PC-9 (cell line): ENCODE measurements at regions of chr6 and their contacts with region 1.

Region 1: GRCh38 chr6:28910902-28911690 is 12.7 kb downstream of the TRIM27 start:
- DNase-seq: peak; percentile 52 to 62
- H3K4me3 ChIP-seq: no peak overlapping the region
- H3K27ac ChIP-seq: no peak overlapping the region
- H3K4me1 ChIP-seq: no peaks in the 10 kb centered on the region
- H3K27me3 ChIP-seq: no peaks in the 10 kb centered on the region
- CTCF ChIP-seq: no peak

Region 2: DNA sequence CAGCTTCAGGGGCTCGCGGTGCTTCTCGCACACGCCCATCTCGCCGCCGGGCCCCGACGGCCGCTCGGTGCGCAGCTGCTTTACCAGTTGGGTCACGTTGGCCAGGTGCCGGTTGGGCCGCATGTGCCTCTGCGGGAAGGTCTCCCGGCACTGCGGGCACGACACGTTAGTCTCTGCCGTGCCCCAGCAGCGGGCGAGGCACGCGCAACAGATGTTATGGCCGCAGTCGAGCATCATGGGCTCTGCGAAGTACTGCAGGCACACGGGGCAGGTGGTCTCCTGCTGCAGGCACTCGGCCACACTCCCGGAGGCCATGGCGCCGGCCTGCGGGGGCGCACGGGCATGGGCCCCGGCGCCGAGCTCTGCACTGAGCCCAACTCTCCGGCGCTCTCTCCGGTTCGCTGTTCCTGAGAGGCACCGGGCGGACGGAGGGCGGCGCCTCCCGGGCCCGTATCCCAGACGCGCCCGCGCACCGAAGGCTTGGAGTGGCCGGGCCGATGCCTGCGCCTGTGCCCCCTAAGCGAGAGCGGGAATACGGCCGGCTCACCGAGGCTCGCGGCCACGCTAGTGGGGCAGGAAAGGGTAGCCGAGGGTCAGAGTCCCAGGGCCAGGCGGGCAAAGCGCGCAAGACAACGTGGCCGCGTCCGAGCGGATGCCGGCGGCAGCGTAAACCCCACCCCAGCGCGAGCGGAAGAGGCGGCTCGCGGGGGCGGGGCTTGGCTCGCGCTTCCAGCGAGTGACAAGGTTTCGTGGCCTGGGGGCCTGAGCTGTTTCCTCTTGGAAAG is 12.4 kb after region 1 on chr6 and contains the start of gene TRIM27:
- CTCF ChIA-PET with region 1: interaction called, 6 read pairs
- POLR2A ChIA-PET with region 1: interaction called, 33 read pairs
- intact Hi-C with region 1: no loop called
- DNase-seq: peak; percentile 83 to 94
- H3K4me3 ChIP-seq: peak within 1 kb of the TSS; percentile 91
- H3K27ac ChIP-seq: peak within 1 kb of the TSS; percentile 76
- H3K4me1 ChIP-seq: peaks cover 20% of the 10 kb centered on the region
- H3K27me3 ChIP-seq: no peaks in the 10 kb centered on the region
- CTCF ChIP-seq: no peak
- total RNA-seq, gene TRIM27: 67.2 and 86.2 TPM in 2 replicates